AG04449 (cell line): ENCODE measurements at regions of chr19 and their contacts with region 1.

Region 1: DNA sequence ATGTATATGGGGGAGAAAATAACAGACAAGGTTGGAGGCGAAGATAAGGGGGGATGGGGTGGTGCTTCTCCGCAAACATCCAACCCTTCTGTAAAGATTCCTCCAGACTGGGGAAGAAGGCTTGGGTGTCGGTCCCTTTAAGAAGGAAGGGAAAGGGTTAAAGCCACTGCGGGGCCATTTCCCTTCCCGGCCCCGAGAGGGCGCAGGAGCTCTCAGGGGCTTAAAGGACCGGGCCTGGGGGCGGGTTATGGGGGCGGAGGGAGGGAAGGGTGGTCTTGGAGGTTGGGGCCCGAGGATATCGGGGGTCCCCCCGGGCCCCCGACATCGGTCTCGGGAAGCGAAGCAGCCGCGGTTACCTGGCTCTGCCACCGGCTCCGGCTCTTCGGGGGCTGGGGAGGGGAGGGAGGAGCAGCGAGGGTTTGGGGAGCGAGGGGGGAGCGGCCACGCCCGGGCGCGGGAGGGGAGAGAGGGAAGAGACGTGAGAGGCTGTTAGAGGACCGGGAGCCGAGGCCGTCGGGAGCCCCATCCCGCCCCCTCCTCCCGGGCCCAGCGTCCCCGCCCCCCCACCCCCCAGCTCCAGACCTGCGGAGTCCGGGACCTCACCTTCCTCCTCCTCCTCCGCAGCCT is 2.8 kb downstream of the TNNT1 start:
- DNase-seq: no peak
- H3K4me3 ChIP-seq: peak overlapping the region; percentile 15
- CTCF ChIP-seq: peak; percentile 60

Region 2: GRCh38 chr19:55132453-55133129 is 13.6 kb before region 1 on chr19:
- CTCF ChIA-PET with region 1: interaction called, 18 read pairs
- POLR2A ChIA-PET with region 1: no interaction called
- DNase-seq: no peak
- H3K4me3 ChIP-seq: no peak overlapping the region
- CTCF ChIP-seq: no peak

Region 3: DNA sequence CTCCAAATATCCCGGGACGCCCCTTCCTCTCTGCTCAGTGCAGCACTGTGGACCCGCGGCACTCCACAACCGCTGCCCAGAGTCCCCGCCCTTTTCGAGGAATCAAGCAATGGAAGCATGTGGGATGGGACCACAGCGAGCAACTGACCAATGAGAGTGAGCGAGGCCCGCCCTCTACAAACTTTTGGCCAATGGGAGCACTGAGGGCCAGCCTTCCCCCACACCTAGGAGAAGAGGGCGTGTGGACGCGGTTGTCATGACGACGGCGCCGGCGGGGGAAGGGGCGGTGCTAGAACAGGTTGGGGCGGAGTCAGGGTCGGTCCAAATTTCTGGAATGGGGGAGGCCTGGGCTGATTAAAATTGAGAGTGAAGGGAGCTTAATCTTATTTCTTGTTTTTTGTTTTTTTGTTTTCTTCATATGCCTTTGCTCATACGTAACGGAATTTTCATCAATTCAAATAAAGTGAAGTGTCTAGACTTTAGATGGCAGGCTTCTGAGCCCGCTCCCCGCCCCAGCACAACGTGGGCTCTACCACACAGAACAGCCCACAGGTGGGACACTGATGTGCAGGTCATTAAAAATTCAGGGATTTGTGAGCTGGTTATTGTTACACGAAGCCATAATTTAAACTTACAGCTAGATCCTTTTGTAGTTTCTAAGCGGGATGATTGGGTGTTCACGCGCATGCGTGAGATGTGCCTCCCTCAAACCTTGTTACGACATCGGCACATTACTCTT is 20.5 kb after region 1 on chr19 and contains the start of gene DNAAF3:
- CTCF ChIA-PET with region 1: interaction called, 11 read pairs
- POLR2A ChIA-PET with region 1: no interaction called
- DNase-seq: peak; percentile 81
- H3K4me3 ChIP-seq: peak within 1 kb of the TSS; percentile 65
- CTCF ChIP-seq: no peak

Region 4: GRCh38 chr19:55227241-55228014 is 81.2 kb after region 1 on chr19:
- CTCF ChIA-PET with region 1: no interaction called
- POLR2A ChIA-PET with region 1: no interaction called
- DNase-seq: no peak
- H3K4me3 ChIP-seq: no peak overlapping the region
- CTCF ChIP-seq: no peak

Region 5: DNA sequence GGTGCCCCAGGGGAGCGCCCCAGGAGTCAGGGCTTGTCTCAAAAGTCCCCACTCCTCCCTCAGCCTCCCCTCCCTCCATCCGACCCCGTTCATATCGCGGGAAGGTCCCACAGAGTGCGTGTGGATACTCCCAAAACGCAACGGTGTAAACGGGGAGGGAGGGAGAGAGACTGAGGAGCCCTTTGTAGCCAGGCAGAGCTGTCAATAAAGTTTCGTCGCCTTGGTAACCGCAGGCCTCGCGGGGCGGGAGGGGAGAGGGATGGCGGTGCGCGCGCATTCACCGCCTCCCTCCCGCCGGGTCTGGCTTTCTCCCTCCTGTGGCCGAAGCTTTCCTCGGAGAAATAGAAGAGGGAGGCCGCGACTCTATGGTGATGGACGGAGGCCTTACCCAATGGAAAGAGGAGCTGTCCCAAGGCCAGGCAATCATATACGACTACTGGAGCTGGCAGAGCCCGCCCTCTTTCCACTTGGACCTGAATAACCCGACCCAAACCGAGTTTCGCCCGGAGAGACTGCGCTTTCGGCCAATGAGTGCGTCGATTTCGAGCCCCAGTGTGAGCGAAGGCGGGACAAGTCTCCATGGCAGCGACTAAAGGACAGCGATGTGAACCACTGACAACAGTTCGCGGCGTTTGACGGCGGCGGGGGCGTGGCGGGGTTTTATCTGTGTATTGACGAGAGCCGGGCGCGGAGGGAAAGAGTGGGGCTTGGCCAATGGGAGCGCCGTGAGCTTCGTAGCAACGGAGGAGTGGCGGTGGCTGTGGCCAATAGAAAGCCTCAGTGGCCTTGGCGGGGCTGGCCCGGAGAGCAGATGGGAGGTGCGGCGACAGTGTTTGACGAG is 193.1 kb after region 1 on chr19 and contains the start of gene KMT5C:
- CTCF ChIA-PET with region 1: no interaction called
- POLR2A ChIA-PET with region 1: no interaction called
- DNase-seq: peak; percentile 100
- H3K4me3 ChIP-seq: peak within 1 kb of the TSS; percentile 74
- CTCF ChIP-seq: peak; percentile 47

Region 6: DNA sequence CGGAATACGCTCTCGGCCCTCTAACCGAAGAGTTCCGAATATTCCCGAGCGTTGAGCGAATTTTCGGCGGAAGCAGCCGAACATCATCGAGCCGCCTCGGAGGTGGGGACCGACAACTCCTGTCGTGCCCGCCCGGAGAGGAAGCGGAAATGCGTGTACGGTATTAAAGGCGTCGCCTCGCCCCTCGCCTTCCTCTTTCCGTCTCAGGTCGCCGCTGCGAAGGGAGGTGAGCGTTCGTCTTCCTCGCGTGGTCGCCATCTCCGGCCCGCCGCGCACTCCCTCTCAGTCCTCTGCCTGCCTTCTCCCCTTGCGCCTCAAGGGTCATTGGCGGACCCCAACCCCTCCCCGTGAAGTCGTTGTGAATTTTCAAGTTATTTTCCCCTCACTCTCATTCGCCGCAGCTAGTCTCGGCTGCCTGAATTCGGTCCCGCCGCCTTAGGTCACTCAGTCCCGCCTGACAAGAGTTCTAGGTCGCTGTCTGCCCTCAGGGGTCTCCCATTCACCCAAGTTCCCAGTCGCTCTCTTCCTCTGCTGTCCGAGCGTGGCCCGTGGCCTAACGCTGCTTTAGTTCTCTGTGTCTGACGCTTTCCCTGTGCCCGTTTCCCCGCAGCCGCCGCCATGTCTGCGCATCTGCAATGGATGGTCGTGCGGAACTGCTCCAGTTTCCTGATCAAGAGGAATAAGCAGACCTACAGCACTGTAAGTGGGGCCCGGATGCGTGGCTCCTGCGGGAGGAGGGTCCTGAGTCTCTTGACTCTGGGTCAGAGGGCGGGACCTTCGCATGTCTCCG is 239.7 kb after region 1 on chr19 and contains the start of gene RPL28:
- CTCF ChIA-PET with region 1: interaction called, 13 read pairs
- POLR2A ChIA-PET with region 1: no interaction called
- DNase-seq: peak; percentile 74
- H3K4me3 ChIP-seq: peak within 1 kb of the TSS; percentile 97
- CTCF ChIP-seq: no peak

Region 7: GRCh38 chr19:55452749-55453346 is 306.7 kb after region 1 on chr19:
- CTCF ChIA-PET with region 1: interaction called, 20 read pairs
- POLR2A ChIA-PET with region 1: no interaction called
- DNase-seq: no peak
- H3K4me3 ChIP-seq: no peak overlapping the region
- CTCF ChIP-seq: no peak

Region 8: GRCh38 chr19:55467236-55468053 is 321.3 kb after region 1 on chr19:
- CTCF ChIA-PET with region 1: interaction called, 21 read pairs
- POLR2A ChIA-PET with region 1: no interaction called
- DNase-seq: no peak
- H3K4me3 ChIP-seq: no peak overlapping the region
- CTCF ChIP-seq: peak; percentile 96

Region 9: GRCh38 chr19:55632463-55632834 is 486.3 kb after region 1 on chr19:
- CTCF ChIA-PET with region 1: interaction called, 19 read pairs
- POLR2A ChIA-PET with region 1: no interaction called
- DNase-seq: peak; percentile 84
- H3K4me3 ChIP-seq: no peak overlapping the region
- CTCF ChIP-seq: peak; percentile 76